Activated CD4-positive, alpha-beta memory T cell treated with anti-CD3 and anti-CD28 coated beads for 36 hours (primary cell): ENCODE measurements at regions of chr16 and their contacts with region 1.

Region 1: GRCh38 chr16:30747799-30748634 is at the start of gene PHKG2:
- DNase-seq: peak; percentile 99
- H3K4me3 Mint-ChIP-seq: peak within 1 kb of the TSS; percentile 91
- H3K27ac Mint-ChIP-seq: peak within 1 kb of the TSS; percentile 77
- H3K4me1 Mint-ChIP-seq: peaks cover 23% of the 10 kb centered on the region
- H3K27me3 Mint-ChIP-seq: no peaks in the 10 kb centered on the region
- total RNA-seq, gene PHKG2: 24.1 to 27.9 TPM

Region 2: GRCh38 chr16:30637942-30638341 is 110.1 kb before region 1 on chr16:
- CTCF ChIA-PET with region 1: no interaction called
- POLR2A ChIA-PET with region 1: no interaction called
- intact Hi-C with region 1: no loop called
- DNase-seq: peak; percentile 33
- H3K4me3 Mint-ChIP-seq: no peak overlapping the region
- H3K27ac Mint-ChIP-seq: no peak overlapping the region
- H3K4me1 Mint-ChIP-seq: peaks cover 9% of the 10 kb centered on the region
- H3K27me3 Mint-ChIP-seq: no peaks in the 10 kb centered on the region

Region 3: DNA sequence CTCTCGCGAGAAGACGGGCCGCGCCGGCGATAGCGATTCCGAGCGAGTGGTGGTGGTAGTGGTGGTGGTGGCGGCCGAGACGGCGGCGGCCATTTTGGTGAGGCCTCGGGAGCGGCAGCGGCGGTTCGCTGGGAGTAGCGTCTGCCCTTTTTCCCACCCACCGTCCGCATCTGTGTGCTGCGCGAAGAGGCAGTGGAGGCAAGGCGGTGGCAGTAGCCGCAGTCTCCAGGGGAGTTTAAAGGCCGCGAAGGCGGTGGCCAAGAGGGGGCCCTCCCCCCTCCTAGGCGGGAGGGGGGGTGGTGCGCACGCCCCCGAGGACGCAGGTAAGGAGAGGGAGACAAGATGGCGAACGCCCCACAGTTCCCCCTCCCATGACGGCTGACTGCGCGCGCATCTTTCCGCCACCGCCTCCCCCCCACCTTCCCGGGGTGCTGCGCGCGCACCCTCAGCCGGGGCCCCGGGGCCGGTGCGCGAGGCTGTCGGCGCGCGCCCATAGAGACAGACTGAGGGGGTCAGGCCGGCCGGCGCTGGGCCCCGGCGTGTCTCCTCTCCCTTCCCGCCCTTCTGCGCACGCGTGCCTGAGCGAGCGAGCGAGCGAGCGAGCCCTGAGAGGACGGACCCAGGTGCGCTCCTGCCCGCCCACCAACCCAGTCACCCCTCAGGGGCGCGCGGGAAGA is 49.7 kb before region 1 on chr16:
- CTCF ChIA-PET with region 1: no interaction called
- POLR2A ChIA-PET with region 1: interaction called, 4 read pairs
- intact Hi-C with region 1: loop called (anchors 1 kb)
- DNase-seq: peak; percentile 99
- H3K4me3 Mint-ChIP-seq: peak overlapping the region; percentile 96
- H3K27ac Mint-ChIP-seq: peak overlapping the region; percentile 99
- H3K4me1 Mint-ChIP-seq: peaks cover 29% of the 10 kb centered on the region
- H3K27me3 Mint-ChIP-seq: no peaks in the 10 kb centered on the region

Region 4: DNA sequence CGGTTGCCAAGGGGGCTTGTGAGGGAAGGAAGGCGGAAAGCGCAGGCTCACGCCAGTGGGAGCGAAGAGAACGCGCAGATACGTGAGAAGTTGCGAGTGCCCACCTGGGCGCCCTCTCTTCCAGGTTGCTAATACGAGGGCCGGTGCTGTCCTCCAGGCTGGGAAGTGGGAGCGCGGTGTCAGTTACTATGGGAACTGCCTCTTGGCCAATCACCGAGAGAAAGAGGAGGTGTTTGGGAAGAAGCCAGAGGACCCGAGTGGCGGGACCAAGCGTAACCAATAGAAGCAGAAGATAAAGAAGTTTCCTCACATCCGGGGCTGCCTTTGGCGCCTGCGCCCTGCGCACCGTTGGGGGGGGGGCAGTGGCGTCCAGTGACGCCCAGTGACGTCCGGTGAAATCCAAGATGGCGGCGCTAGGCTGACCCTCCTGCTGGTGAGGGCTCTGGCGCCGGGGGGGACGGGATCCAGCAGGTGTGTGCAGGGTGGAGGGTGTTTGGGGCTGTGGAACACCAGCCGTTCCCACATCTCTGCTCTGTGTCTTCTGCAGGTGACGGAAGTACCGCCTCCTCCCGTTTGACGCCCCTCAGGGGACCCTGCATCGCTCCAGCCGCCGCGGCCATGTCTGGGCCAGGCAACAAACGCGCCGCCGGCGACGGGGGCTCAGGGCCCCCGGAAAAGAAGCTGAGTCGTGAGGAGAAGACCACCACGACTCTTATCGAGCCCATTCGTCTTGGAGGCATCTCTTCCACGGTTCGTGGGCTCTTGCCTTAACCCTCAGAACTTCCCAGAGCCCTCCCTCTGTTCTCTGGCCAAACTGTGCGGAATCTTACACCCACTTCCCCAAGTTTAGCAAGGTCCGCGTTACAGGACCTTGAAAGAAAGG is 14.2 kb after region 1 on chr16 and contains the starts of genes CFAP119 and RNF40:
- CTCF ChIA-PET with region 1: no interaction called
- POLR2A ChIA-PET with region 1: interaction called, 7 read pairs
- intact Hi-C with region 1: loop called (anchors 1 kb)
- DNase-seq: peak; percentile 96
- H3K4me3 Mint-ChIP-seq: peak within 1 kb of the TSS; percentile 93
- H3K27ac Mint-ChIP-seq: peak within 1 kb of the TSS; percentile 81
- H3K4me1 Mint-ChIP-seq: peaks cover 25% of the 10 kb centered on the region
- H3K27me3 Mint-ChIP-seq: no peaks in the 10 kb centered on the region
- total RNA-seq, gene CFAP119: 3.8 to 4.9 TPM
- total RNA-seq, gene RNF40: 70.9 to 72.8 TPM

Region 5: DNA sequence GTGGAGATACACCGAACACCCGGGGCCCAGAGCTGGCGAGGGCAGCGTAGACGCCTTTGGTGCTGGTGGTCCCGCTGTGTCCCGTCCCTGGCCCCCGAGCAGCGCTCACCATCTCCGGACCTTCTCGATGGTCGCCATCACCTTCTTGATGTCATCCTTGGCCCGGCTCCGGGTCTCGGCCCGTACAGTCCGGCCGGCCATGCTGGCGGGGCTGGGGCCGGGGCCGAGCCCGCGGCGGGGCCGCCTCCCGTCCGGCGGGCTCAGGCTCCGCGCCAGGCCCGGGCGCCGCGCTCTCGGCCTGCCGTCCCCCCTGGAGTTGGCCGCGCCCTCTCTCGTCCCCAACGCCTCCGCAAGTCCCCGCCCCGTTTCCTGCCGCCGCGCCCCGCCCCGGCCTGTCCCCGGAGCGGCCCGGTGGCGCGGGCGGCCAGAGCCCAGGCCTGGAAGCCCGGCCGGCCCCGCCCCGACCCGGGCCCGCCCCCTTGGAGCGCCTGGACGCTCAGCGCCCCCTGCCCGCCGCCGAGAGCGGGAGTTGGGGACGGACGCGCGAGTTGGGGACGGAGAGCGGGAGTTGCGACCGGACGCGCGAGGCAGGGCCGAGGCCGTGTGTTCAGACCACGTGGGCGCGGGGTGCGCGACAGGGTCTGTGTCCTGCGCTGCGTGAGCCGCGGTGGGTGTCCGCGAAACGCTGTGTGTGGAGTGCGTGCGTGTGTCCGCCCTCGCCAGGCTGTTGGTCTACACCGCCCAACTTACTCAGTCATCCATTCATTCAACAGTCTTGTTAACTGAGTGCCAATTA is 145.9 kb after region 1 on chr16 and contains the start of gene BCL7C:
- CTCF ChIA-PET with region 1: no interaction called
- POLR2A ChIA-PET with region 1: no interaction called
- intact Hi-C with region 1: no loop called
- DNase-seq: peak; percentile 92
- H3K4me3 Mint-ChIP-seq: peak within 1 kb of the TSS; percentile 85
- H3K27ac Mint-ChIP-seq: peak within 1 kb of the TSS; percentile 74
- H3K4me1 Mint-ChIP-seq: peaks cover 38% of the 10 kb centered on the region
- H3K27me3 Mint-ChIP-seq: no peaks in the 10 kb centered on the region
- total RNA-seq, gene BCL7C: 25.6 to 25.7 TPM

Region 6: DNA sequence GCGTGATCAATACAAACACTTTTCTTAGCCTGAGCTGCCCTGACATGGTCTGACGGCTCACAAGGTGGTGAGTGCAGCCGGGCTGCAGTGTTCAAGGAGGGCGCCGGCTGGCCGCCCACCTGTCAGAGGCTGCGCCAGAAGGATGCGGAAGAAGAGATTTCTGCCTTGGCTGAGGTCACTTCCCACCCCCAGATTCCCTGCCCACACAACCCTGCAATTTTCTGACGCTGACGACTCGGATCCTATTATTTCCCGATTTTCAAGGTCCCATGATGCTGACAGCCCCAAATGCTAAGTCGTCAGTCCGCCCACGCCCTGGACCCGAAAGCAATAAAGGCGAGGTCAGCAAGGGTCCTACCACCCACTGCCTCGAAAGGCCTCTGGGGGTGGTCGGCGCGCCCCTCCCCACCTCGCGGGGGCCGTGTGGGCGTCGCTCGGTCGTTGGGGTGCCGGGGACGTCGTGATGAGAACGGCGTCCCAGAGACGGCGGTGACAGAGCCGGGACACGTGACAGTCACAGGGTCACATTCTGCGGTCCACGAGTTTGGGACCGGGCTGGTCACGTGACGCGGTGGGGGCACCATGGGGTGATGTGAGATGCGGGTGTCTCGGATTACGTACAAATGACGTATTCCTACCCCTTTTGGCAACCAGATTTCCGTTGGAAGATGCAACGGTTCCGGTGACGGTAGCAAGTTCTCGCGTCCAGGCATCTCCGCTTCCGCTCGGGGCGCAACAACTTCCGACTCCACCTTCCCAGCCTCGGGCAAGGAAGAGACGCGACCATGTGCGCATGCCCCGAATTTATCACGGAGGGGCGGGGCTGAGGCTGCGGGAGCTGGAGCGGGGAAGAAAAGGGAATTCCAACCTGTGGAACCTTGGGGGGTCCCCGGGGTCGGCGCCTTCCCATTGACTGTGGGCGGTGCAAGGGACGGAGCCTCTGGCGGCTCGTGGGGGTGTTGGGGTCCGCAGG is 285.0 kb after region 1 on chr16 and contains the start of gene STX4:
- CTCF ChIA-PET with region 1: no interaction called
- POLR2A ChIA-PET with region 1: no interaction called
- intact Hi-C with region 1: loop called (anchors 5 kb)
- DNase-seq: peak; percentile 99
- H3K4me3 Mint-ChIP-seq: peak within 1 kb of the TSS; percentile 95
- H3K27ac Mint-ChIP-seq: peak within 1 kb of the TSS; percentile 93
- H3K4me1 Mint-ChIP-seq: peaks cover 16% of the 10 kb centered on the region
- H3K27me3 Mint-ChIP-seq: no peaks in the 10 kb centered on the region
- total RNA-seq, gene STX4: 46.7 to 46.8 TPM